B cell (primary cell): ENCODE measurements at regions of chr12 and their contacts with region 1.

Region 1: GRCh38 chr12:25397001-25397400 is 146.3 kb upstream of the KRAS start:
- DNase-seq: no peak
- ATAC-seq: no peak
- H3K4me3 ChIP-seq: no peak overlapping the region
- H3K4me3 Mint-ChIP-seq: no peak overlapping the region
- H3K27ac ChIP-seq: no peak overlapping the region
- H3K27ac Mint-ChIP-seq: no peak overlapping the region
- H3K4me1 ChIP-seq: peaks cover 0 to 4% of the 10 kb centered on the region in 2 donors
- H3K4me1 Mint-ChIP-seq: peaks cover 4% of the 10 kb centered on the region
- H3K27me3 ChIP-seq: no peaks in the 10 kb centered on the region
- H3K27me3 Mint-ChIP-seq: peaks cover 6% of the 10 kb centered on the region
- CTCF ChIP-seq: no peak

Region 2: GRCh38 chr12:25241167-25242020 is 155.6 kb before region 1 on chr12:
- CTCF ChIA-PET with region 1: interaction called, 16 read pairs
- POLR2A ChIA-PET with region 1: no interaction called
- intact Hi-C with region 1: no loop called
- DNase-seq: peak; percentile 73
- ATAC-seq: peak; percentile 51
- H3K4me3 ChIP-seq: no peak overlapping the region
- H3K4me3 Mint-ChIP-seq: no peak overlapping the region
- H3K27ac ChIP-seq: peak overlapping the region in 1 of 2 donors; percentile 52
- H3K27ac Mint-ChIP-seq: peak overlapping the region; percentile 26
- H3K4me1 ChIP-seq: no peaks in the 10 kb centered on the region
- H3K4me1 Mint-ChIP-seq: peaks cover 9% of the 10 kb centered on the region
- H3K27me3 ChIP-seq: no peaks in the 10 kb centered on the region
- H3K27me3 Mint-ChIP-seq: no peaks in the 10 kb centered on the region
- CTCF ChIP-seq: peak; percentile 89

Region 3: DNA sequence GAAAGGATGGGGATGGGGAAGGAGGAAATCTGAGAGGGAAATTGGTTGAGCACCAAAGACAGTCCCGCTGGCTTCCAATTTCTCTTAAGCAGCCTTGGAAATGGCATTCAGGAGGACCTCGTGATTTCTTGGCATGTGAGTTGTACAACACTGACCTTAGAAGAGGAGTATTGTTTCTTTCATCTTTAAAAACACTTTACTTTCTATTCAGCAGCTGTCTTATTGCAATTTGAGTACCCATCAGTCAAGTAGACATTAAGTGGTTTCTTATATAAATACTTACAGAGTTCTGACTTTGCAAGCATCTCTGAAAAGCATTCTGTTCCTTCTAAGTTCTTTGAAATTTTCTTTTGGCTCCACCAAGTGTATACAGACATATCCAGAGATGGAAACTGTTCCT is 72.9 kb after region 1 on chr12:
- CTCF ChIA-PET with region 1: no interaction called
- POLR2A ChIA-PET with region 1: no interaction called
- intact Hi-C with region 1: no loop called
- DNase-seq: no peak
- ATAC-seq: no peak
- H3K4me3 ChIP-seq: no peak overlapping the region
- H3K4me3 Mint-ChIP-seq: no peak overlapping the region
- H3K27ac ChIP-seq: no peak overlapping the region
- H3K27ac Mint-ChIP-seq: no peak overlapping the region
- H3K4me1 ChIP-seq: no peaks in the 10 kb centered on the region
- H3K4me1 Mint-ChIP-seq: no peaks in the 10 kb centered on the region
- H3K27me3 ChIP-seq: no peaks in the 10 kb centered on the region
- H3K27me3 Mint-ChIP-seq: no peaks in the 10 kb centered on the region
- CTCF ChIP-seq: no peak